ENCODE measurements at regions of chr14 and their contacts with region 1.

Region 1: DNA sequence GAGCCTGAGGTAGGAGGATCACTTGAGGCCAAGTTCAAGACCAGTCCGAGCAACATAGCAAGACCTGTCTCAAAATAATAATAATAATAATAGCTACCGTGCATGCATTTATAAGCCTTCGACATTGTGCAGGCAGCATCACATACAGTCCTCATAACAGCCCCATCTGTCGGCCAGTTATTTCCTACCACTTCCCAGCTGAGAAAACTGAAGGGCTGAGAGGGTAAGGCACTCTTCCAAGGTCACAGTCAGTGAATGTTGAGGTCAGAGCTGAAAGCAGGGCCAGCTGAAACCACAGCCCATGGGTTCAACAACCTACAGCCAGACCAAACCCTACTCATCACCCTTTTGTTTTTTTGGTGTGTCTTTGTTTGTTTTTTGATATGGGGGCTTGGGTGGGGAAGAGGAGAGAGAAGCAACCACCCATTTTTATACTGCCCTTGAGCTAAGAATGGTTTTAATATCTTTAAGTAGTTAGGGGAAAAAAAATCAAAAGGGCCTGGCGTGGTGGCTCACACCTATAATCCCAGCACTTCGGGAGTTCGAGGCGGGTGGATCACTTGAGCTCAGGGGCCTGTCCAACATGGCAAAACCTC is 16.8 kb upstream of the ITPK1 start:
- DNase-seq: peak; percentile 56
- H3K4me3 Mint-ChIP-seq: no peak overlapping the region
- H3K27ac Mint-ChIP-seq: no peak overlapping the region
- H3K4me1 Mint-ChIP-seq: no peaks in the 10 kb centered on the region
- H3K27me3 Mint-ChIP-seq: peaks cover 25% of the 10 kb centered on the region

Region 2: GRCh38 chr14:92951912-92952471 is 180.6 kb before region 1 on chr14:
- CTCF ChIA-PET with region 1: interaction called, 11 read pairs
- DNase-seq: peak; percentile 87
- H3K4me3 Mint-ChIP-seq: no peak overlapping the region
- H3K27ac Mint-ChIP-seq: no peak overlapping the region
- H3K4me1 Mint-ChIP-seq: peaks cover 3% of the 10 kb centered on the region
- H3K27me3 Mint-ChIP-seq: no peaks in the 10 kb centered on the region

Region 3: GRCh38 chr14:93023039-93023438 is 109.5 kb before region 1 on chr14:
- CTCF ChIA-PET with region 1: no interaction called
- DNase-seq: peak; percentile 35
- H3K4me3 Mint-ChIP-seq: no peak overlapping the region
- H3K27ac Mint-ChIP-seq: no peak overlapping the region
- H3K4me1 Mint-ChIP-seq: peaks cover 11% of the 10 kb centered on the region
- H3K27me3 Mint-ChIP-seq: no peaks in the 10 kb centered on the region

Measured in activated naive CD4-positive, alpha-beta T cell treated with anti-CD3 and anti-CD28 coated beads, Interleukin-2, amount 10 ng/mL, durations not matched to agents 7 days and 5 days (primary cell).